H1 (cell line): ENCODE measurements at regions of chr11 and their contacts with region 1.

Region 1: GRCh38 chr11:134845474-134846327 is 433.7 kb upstream of the B3GAT1 start:
- DNase-seq: peak in 1 of 2 experiments; percentile 27
- H3K4me3 ChIP-seq: no peak overlapping the region
- H3K27ac ChIP-seq: no peak overlapping the region
- H3K4me1 ChIP-seq: no peaks in the 10 kb centered on the region
- H3K27me3 ChIP-seq: no peaks in the 10 kb centered on the region
- CTCF ChIP-seq: no peak
- EP300 ChIP-seq: no peak
- POLR2A ChIP-seq: no peak
- RAD21 ChIP-seq: no peak

Region 2: DNA sequence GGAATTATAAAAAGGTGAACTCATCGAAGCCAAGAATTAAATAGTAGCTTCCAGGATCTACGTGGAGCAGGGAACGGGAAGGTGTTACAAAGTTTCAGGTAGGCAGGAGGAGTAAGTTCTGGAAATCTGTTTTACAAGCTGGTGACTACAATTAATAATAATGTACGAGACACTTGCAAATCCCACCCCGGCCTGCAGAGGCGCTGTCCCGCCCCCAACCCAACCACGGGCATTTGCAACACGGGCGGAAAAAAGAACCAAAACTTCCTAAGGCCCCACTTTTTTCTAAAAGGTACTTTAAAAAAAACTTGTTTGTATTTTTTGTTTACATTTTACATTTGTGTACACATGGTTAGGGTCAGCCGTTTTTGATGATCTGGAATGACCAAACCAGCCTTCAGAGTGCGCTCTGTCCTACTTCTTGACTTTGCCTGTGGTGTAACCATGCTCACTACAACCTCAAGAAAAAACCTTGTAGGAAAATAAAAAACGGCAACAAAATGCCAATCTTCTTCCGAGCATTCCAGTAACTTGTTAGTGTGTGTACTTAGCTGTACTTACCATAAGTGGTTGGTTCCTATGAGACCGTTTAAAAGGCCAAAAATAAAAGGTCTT is 15.9 kb after region 1 on chr11:
- CTCF ChIA-PET with region 1: interaction called, 26 read pairs
- POLR2A ChIA-PET with region 1: no interaction called
- DNase-seq: no peak
- H3K4me3 ChIP-seq: no peak overlapping the region
- H3K27ac ChIP-seq: no peak overlapping the region
- H3K4me1 ChIP-seq: no peaks in the 10 kb centered on the region
- H3K27me3 ChIP-seq: no peaks in the 10 kb centered on the region; a peak in 1 of 7 replicates
- CTCF ChIP-seq: peak; percentile 41 to 49 (median 45)
- EP300 ChIP-seq: no peak
- POLR2A ChIP-seq: no peak
- RAD21 ChIP-seq: peak; percentile 16 to 19; a peak in 2 of 4 replicates

Region 3: DNA sequence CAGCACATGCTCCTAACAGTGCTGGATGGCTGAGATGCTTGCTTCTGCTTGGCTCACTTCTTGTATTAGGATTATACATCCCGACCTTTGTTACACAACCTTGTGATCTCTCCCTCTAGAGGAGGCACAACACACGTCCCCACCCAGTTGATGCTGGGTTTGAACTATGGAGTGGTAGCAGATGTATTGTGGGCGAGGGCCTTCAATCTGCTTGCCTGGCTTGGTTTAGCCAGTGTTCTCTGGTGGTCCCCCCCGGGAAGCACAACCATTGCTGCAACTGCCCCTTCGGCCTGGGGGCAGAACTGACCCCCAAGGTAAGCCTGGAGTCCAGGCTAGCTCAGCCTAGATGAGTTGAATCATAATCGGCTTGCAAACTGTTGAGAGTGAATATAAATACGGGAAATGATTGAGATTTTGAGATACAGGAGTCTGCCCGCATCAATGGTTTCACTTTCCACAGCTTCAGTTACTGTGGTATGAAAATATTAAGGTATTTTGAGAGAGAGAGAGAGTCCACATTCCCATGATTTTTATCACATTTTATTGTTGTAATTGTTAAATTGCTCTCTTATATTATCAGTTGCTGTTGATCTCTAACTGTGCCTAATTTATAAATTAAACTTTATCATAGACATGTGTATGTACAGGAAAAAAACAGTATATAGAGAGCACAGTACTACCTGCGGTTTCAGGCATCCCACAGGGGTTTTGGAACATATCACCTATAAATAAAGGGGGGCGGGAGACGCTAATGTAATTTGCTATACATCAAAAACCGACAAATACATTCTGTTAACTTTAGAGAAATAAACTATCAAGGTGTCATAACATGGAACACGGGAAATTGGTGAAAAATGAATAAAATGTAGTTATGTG is 48.3 kb after region 1 on chr11:
- CTCF ChIA-PET with region 1: no interaction called
- POLR2A ChIA-PET with region 1: no interaction called
- DNase-seq: no peak
- H3K4me3 ChIP-seq: no peak overlapping the region
- H3K27ac ChIP-seq: no peak overlapping the region
- H3K4me1 ChIP-seq: no peaks in the 10 kb centered on the region
- H3K27me3 ChIP-seq: no peaks in the 10 kb centered on the region
- CTCF ChIP-seq: no peak
- EP300 ChIP-seq: no peak
- POLR2A ChIP-seq: no peak
- RAD21 ChIP-seq: no peak

Region 4: DNA sequence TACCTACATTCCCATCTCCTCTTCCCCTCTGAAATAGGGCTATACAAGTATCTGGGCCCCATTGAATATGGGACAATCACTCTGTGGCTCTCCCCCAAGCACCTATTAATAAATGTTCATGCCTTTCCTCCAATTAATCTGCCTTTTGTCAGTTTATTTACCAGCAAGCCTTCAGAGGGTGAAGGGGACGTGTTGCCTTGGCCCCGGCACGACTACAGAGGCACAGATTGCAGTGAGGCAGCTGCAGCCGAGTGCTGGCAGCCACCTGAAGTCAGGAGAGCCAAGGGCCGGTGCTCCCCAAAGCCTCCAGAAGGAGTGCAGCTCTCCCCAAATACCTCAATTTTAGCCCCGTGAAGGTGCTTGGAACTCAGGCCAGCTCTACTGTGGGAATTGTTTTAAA is 147.3 kb after region 1 on chr11:
- CTCF ChIA-PET with region 1: no interaction called
- POLR2A ChIA-PET with region 1: no interaction called
- DNase-seq: no peak
- H3K4me3 ChIP-seq: no peak overlapping the region
- H3K27ac ChIP-seq: no peak overlapping the region
- H3K4me1 ChIP-seq: peaks cover 12 to 33% (median 29%) of the 10 kb centered on the region in 4 experiments
- H3K27me3 ChIP-seq: no peaks in the 10 kb centered on the region
- CTCF ChIP-seq: no peak
- EP300 ChIP-seq: no peak
- POLR2A ChIP-seq: no peak
- RAD21 ChIP-seq: no peak